ENCODE measurements at regions of chr16 and their contacts with region 1.

Region 1: GRCh38 chr16:83967806-83968305 is at the start of gene NECAB2:
- DNase-seq: peak in 2 of 4 donors; percentile 22 to 91
- ATAC-seq: peak; percentile 80
- H3K4me3 ChIP-seq: no peak within 1 kb of the TSS
- H3K27ac ChIP-seq: no peak within 1 kb of the TSS
- H3K4me1 ChIP-seq: peaks cover 0 to 6% of the 10 kb centered on the region in 2 donors
- H3K27me3 ChIP-seq: peaks cover 0 to 39% of the 10 kb centered on the region in 2 donors
- CTCF ChIP-seq: peak; percentile 52 to 66
- polyA plus RNA-seq, gene NECAB2: 0.20 to 0.79 (median 0.45) TPM

Region 2: DNA sequence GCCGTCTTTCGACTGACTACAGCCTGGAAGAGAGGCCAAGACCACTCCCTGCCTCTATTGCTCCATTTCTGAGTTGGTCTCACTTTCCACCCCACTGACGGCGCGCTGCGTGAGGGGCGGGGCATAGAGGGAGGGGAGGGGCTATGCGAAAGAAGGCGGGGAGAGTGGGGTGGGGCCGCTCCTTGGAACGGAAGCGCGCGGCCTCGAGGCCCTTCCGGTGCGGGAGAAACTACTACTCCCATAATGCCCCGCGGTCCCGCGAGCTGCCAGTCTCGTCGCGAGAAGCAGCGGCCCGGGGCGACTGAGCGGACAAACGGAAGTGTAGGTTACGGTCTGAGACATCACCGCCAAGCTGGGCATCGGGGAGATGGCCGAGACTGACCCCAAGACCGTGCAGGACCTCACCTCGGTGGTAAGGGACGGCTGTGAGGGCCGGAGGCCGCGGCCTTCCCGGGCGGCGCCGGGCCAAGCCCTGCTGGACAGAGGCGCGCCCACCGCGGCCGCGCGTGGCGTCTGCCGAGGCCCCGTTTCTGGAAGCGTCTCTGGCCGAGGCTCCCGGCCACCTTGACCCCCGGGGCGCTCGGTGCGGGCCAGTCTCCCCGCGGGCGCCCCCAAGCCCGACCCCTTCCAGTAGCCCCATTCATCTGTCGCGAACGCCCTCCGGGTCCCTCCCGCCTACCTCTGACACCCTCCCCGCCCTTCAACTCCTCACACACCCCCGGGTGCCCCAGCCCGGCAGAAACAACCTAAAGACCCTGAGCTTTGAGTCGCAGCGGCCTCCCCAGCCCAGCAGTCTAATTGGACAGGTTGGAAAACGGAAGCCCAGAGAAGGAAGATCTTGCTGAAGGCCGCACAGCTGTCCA is 159.9 kb before region 1 on chr16 and contains the start of gene HSBP1:
- intact Hi-C with region 1: no loop called
- DNase-seq: peak; percentile 87 to 98 (median 93)
- ATAC-seq: peak; percentile 97
- H3K4me3 ChIP-seq: peak within 1 kb of the TSS; percentile 94 to 96
- H3K27ac ChIP-seq: peak within 1 kb of the TSS; percentile 86 to 91
- H3K4me1 ChIP-seq: peaks cover 7 to 48% of the 10 kb centered on the region in 2 donors
- H3K27me3 ChIP-seq: no peaks in the 10 kb centered on the region
- CTCF ChIP-seq: no peak
- polyA plus RNA-seq, gene HSBP1: 162 to 184 (median 175) TPM

Region 3: GRCh38 chr16:84062734-84063640 is 95.1 kb after region 1 on chr16:
- intact Hi-C with region 1: loop called in 1 of 2 experiments (anchors 5 kb)
- DNase-seq: peak; percentile 39 to 93 (median 71)
- ATAC-seq: peak; percentile 97
- H3K4me3 ChIP-seq: no peak overlapping the region
- H3K27ac ChIP-seq: no peak overlapping the region
- H3K4me1 ChIP-seq: peaks cover 0 to 4% of the 10 kb centered on the region in 2 donors
- H3K27me3 ChIP-seq: no peaks in the 10 kb centered on the region
- CTCF ChIP-seq: peak; percentile 85 to 88

Region 4: DNA sequence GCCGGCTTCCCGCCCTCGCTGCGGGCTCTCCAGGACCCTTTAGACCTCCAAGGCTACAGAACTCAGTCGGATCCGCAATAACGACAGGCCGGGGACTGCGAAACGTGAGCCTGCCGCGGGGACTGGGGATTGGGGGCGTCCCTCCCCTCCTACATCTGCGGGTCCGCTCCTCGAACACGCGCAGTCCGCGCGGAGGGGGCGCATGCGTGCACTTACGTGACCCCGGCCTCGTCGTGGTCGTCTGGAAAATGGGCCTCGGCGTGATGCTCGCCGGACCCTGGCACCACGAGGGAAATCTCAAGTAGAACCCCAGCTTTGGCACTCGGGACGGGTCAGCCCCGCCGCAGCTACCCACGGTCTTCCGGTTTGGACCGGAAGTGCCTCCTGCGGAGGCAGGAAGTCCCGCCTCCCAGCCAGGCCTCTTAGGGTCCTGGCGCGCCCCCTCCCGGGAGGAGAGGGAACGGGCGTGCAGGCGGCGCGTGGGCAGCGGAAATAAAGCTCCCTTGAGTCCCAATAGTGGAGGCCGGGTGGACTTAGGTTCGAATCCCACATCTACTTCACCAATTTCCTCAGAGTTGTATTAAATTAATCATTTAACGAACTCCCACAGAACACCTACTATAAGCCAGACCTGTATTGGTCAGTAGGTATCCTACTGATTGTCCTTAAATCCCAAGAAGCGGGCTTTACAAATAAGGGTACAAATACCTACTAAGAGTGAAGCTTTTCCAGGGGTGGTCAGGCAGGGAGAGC is 219.0 kb after region 1 on chr16 and contains the start of gene TAF1C:
- intact Hi-C with region 1: loop called in 1 of 2 experiments (anchors 10 kb)
- DNase-seq: peak; percentile 89 to 98 (median 94)
- ATAC-seq: peak; percentile 99
- H3K4me3 ChIP-seq: peak within 1 kb of the TSS; percentile 92 to 94
- H3K27ac ChIP-seq: peak within 1 kb of the TSS; percentile 69 to 78
- H3K4me1 ChIP-seq: peaks cover 6 to 30% of the 10 kb centered on the region in 2 donors
- H3K27me3 ChIP-seq: no peaks in the 10 kb centered on the region
- CTCF ChIP-seq: peak; percentile 94 to 97
- polyA plus RNA-seq, gene TAF1C: 37.5 to 66.1 (median 56.1) TPM

Measured in left lung (tissue), 14 donors.